IMR-90 (cell line): ENCODE measurements at regions of chr11 and their contacts with region 1.

Region 1: GRCh38 chr11:73141848-73142286 is 251 bp downstream of the FCHSD2 start:
- DNase-seq: peak; percentile 69
- ATAC-seq: peak; percentile 53
- H3K4me3 ChIP-seq: peak overlapping the region; percentile 68
- H3K27ac ChIP-seq: peak overlapping the region; percentile 76
- H3K4me1 ChIP-seq: peaks cover 10% of the 10 kb centered on the region; the same call in 1 of the 2 replicates
- H3K27me3 ChIP-seq: no peaks in the 10 kb centered on the region
- CTCF ChIP-seq: peak; percentile 15; the same call in 1 of the 2 replicates
- POLR2A ChIP-seq: no peak; the same call in none of the 2 replicates
- RAD21 ChIP-seq: no peak

Region 2: GRCh38 chr11:72821883-72822799 is 319.7 kb before region 1 on chr11:
- CTCF ChIA-PET with region 1: no interaction called
- POLR2A ChIA-PET with region 1: interaction called, 13 read pairs
- dilution Hi-C with region 1: no loop called
- in situ Hi-C with region 1: no loop called
- intact Hi-C with region 1: no loop called
- DNase-seq: peak; percentile 84
- ATAC-seq: peak; percentile 98
- H3K4me3 ChIP-seq: peak overlapping the region; percentile 57
- H3K27ac ChIP-seq: no peak overlapping the region; the same call in 1 of the 2 replicates
- H3K4me1 ChIP-seq: peaks cover 6% of the 10 kb centered on the region
- H3K27me3 ChIP-seq: no peaks in the 10 kb centered on the region
- CTCF ChIP-seq: peak; percentile 24; the same call in 1 of the 2 replicates
- POLR2A ChIP-seq: no peak
- RAD21 ChIP-seq: peak; percentile 1; the same call in 1 of the 2 replicates

Region 3: GRCh38 chr11:72924568-72925190 is 217.2 kb before region 1 on chr11:
- CTCF ChIA-PET with region 1: interaction called, 6 read pairs
- POLR2A ChIA-PET with region 1: no interaction called
- dilution Hi-C with region 1: no loop called
- in situ Hi-C with region 1: no loop called
- intact Hi-C with region 1: loop called (anchors 1 kb)
- DNase-seq: peak; percentile 57
- ATAC-seq: peak; percentile 64
- H3K4me3 ChIP-seq: no peak overlapping the region
- H3K27ac ChIP-seq: no peak overlapping the region
- H3K4me1 ChIP-seq: no peaks in the 10 kb centered on the region
- H3K27me3 ChIP-seq: no peaks in the 10 kb centered on the region
- CTCF ChIP-seq: peak; percentile 63
- POLR2A ChIP-seq: no peak
- RAD21 ChIP-seq: peak; percentile 62

Region 4: DNA sequence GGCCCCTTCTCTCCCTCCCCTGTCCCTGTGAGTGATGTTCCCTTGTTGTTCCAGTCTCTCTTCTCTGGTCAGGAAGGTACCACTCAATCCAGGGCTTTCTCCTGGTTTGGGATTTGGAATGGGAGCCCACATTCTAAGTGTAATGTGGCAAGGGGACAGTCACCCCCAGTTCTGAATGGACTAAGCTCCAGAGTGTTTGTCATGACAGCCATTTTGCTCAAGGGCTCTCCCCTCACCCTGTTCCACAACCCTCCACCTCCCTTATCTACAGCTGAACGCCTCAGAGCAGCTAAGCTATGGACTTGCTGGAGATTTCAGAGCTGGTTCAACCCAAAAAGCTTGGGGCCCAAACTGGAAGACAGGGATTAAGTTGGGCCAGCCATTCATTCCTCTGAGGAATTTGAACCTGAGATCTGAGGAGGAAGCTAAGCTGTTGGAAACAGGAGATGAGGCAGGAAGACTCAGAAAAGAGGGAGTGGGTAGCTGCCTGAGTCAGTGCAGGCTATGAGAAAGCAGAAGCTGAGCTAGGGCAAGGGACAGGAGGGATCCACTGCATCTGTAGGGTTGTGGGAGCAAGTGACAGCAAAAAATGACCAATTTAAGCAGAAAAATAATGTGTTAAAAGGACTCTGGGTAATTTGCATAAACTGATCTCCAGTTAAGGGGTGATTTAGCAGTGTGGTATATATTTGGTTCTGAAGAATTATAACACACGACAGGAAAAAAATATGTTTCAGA is 23.1 kb after region 1 on chr11:
- CTCF ChIA-PET with region 1: no interaction called
- POLR2A ChIA-PET with region 1: no interaction called
- dilution Hi-C with region 1: no loop called
- in situ Hi-C with region 1: no loop called
- intact Hi-C with region 1: no loop called
- DNase-seq: no peak
- ATAC-seq: no peak
- H3K4me3 ChIP-seq: no peak overlapping the region
- H3K27ac ChIP-seq: no peak overlapping the region
- H3K4me1 ChIP-seq: peaks cover 14% of the 10 kb centered on the region
- H3K27me3 ChIP-seq: no peaks in the 10 kb centered on the region
- CTCF ChIP-seq: no peak
- POLR2A ChIP-seq: no peak
- RAD21 ChIP-seq: no peak

Region 5: GRCh38 chr11:73177778-73178577 is 36.1 kb after region 1 on chr11:
- CTCF ChIA-PET with region 1: interaction called, 3 read pairs
- POLR2A ChIA-PET with region 1: interaction called, 4 read pairs
- dilution Hi-C with region 1: no loop called
- in situ Hi-C with region 1: no loop called
- intact Hi-C with region 1: loop called (anchors 1 kb)
- DNase-seq: peak; percentile 81
- ATAC-seq: peak; percentile 96
- H3K4me3 ChIP-seq: no peak overlapping the region
- H3K27ac ChIP-seq: no peak overlapping the region
- H3K4me1 ChIP-seq: peaks cover 5% of the 10 kb centered on the region
- H3K27me3 ChIP-seq: no peaks in the 10 kb centered on the region; the same call in 1 of the 2 replicates
- CTCF ChIP-seq: peak; percentile 89
- POLR2A ChIP-seq: peak; percentile 69
- RAD21 ChIP-seq: peak; percentile 98